Naive thymus-derived CD4-positive, alpha-beta T cell (primary cell): ENCODE measurements at regions of chr19 and their contacts with region 1.

Region 1: GRCh38 chr19:46661020-46661731 is at the start of gene DACT3:
- DNase-seq: peak; percentile 98 to 100 (median 99)
- ATAC-seq: peak; percentile 92
- H3K4me3 ChIP-seq: peak within 1 kb of the TSS; percentile 71
- H3K4me3 Mint-ChIP-seq: peak within 1 kb of the TSS; percentile 80 to 93 (median 86)
- H3K27ac ChIP-seq: peak within 1 kb of the TSS; percentile 65
- H3K27ac Mint-ChIP-seq: peak within 1 kb of the TSS; percentile 76 to 96 (median 91)
- H3K4me1 ChIP-seq: peaks cover 14 to 20% of the 10 kb centered on the region in 2 donors
- H3K4me1 Mint-ChIP-seq: peaks cover 7 to 26% (median 20%) of the 10 kb centered on the region in 7 donors
- H3K27me3 ChIP-seq: peaks cover 6 to 10% of the 10 kb centered on the region in 2 donors
- H3K27me3 Mint-ChIP-seq: peaks cover 9 to 42% (median 18%) of the 10 kb centered on the region in 5 donors
- total RNA-seq, gene DACT3: 0.11 to 1.3 (median 0.34) TPM in 4 of 5 experiments, not detected in the other

Region 2: GRCh38 chr19:46392243-46392801 is 268.9 kb before region 1 on chr19:
- CTCF ChIA-PET with region 1: no interaction called
- POLR2A ChIA-PET with region 1: no interaction called
- intact Hi-C with region 1: loop called in 1 of 2 experiments (anchors 1 kb)
- DNase-seq: no peak
- ATAC-seq: no peak
- H3K4me3 ChIP-seq: no peak overlapping the region
- H3K4me3 Mint-ChIP-seq: no peak overlapping the region
- H3K27ac ChIP-seq: peak overlapping the region; percentile 19
- H3K27ac Mint-ChIP-seq: peak overlapping the region in 3 of 9 donors; percentile 2 to 51 (median 40)
- H3K4me1 ChIP-seq: no peaks in the 10 kb centered on the region
- H3K4me1 Mint-ChIP-seq: peaks cover 0 to 18% (median 6%) of the 10 kb centered on the region in 7 donors
- H3K27me3 ChIP-seq: no peaks in the 10 kb centered on the region
- H3K27me3 Mint-ChIP-seq: no peaks in the 10 kb centered on the region

Region 3: GRCh38 chr19:46513461-46514236 is 147.5 kb before region 1 on chr19:
- CTCF ChIA-PET with region 1: interaction called, 8 read pairs
- POLR2A ChIA-PET with region 1: interaction called, 4 read pairs
- intact Hi-C with region 1: loop called in 1 of 2 experiments (anchors 1 kb)
- DNase-seq: peak in 8 of 9 donors; percentile 59 to 86 (median 72)
- ATAC-seq: peak; percentile 89
- H3K4me3 ChIP-seq: no peak overlapping the region
- H3K4me3 Mint-ChIP-seq: no peak overlapping the region
- H3K27ac ChIP-seq: no peak overlapping the region
- H3K27ac Mint-ChIP-seq: peak overlapping the region in 2 of 9 donors; percentile 32 to 64
- H3K4me1 ChIP-seq: peaks cover 5 to 22% of the 10 kb centered on the region in 2 donors
- H3K4me1 Mint-ChIP-seq: peaks cover 8 to 33% (median 29%) of the 10 kb centered on the region in 7 donors
- H3K27me3 ChIP-seq: no peaks in the 10 kb centered on the region
- H3K27me3 Mint-ChIP-seq: peaks cover 0 to 30% (median 13%) of the 10 kb centered on the region in 5 donors

Region 4: DNA sequence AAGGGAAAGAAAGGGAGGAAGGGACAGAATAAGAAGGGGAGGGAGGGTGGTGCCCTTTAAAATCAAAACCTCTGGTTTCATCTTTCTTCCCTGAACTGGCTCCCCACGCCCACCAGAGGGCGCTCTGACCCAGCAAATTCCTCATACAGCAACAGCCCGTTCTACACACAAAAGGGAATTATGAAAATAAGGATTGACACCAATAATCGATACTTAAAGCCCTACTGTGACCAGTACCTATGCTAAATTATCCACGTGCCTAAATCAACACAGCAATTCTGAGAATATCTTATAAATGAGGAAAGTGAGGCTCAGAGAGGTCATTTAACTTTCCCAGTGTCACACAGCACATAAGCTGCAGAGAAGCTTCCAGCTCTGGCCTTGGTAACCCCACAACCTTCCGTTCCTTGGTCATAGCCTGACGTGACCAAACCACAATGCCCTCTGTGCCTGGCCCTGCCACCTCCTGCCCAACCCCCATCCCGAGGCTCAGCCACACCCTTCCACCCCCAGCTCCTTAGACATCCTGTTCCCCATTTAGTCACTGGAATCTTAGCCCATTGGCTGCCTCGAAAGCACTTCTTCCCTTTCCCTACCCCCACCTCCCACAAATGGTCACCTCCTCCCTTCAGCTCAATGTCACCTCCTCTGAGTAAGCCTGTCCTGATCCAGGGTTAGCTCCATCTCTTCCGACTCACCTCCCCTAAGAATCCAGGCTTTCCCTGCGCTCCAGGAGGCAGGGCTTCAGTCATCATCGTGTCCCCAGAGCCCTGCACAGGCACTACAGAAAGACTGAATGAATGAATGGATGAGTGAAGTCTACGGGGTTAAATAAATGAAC is 131.3 kb before region 1 on chr19:
- CTCF ChIA-PET with region 1: interaction called, 46 read pairs
- POLR2A ChIA-PET with region 1: interaction called, 4 read pairs
- intact Hi-C with region 1: loop called (anchors 1 kb)
- DNase-seq: peak; percentile 57 to 83 (median 73)
- ATAC-seq: peak; percentile 95
- H3K4me3 ChIP-seq: no peak overlapping the region
- H3K4me3 Mint-ChIP-seq: peak overlapping the region in 4 of 10 donors; percentile 1 to 65 (median 32)
- H3K27ac ChIP-seq: no peak overlapping the region
- H3K27ac Mint-ChIP-seq: peak overlapping the region in 7 of 9 donors; percentile 17 to 89 (median 68)
- H3K4me1 ChIP-seq: peaks cover 8 to 19% of the 10 kb centered on the region in 2 donors
- H3K4me1 Mint-ChIP-seq: peaks cover 15 to 35% (median 23%) of the 10 kb centered on the region in 7 donors
- H3K27me3 ChIP-seq: no peaks in the 10 kb centered on the region
- H3K27me3 Mint-ChIP-seq: no peaks in the 10 kb centered on the region

Region 5: GRCh38 chr19:46542428-46543230 is 118.5 kb before region 1 on chr19:
- CTCF ChIA-PET with region 1: interaction called, 18 read pairs
- POLR2A ChIA-PET with region 1: no interaction called
- intact Hi-C with region 1: loop called (anchors 1 to 5 kb)
- DNase-seq: peak; percentile 46 to 73 (median 64)
- ATAC-seq: peak; percentile 87
- H3K4me3 ChIP-seq: no peak overlapping the region
- H3K4me3 Mint-ChIP-seq: no peak overlapping the region
- H3K27ac ChIP-seq: no peak overlapping the region
- H3K27ac Mint-ChIP-seq: peak overlapping the region in 2 of 9 donors; percentile 14 to 16
- H3K4me1 ChIP-seq: no peaks in the 10 kb centered on the region
- H3K4me1 Mint-ChIP-seq: peaks cover 2 to 13% (median 5%) of the 10 kb centered on the region in 7 donors
- H3K27me3 ChIP-seq: no peaks in the 10 kb centered on the region
- H3K27me3 Mint-ChIP-seq: peaks cover 0 to 11% (median 0%) of the 10 kb centered on the region in 5 donors

Region 6: DNA sequence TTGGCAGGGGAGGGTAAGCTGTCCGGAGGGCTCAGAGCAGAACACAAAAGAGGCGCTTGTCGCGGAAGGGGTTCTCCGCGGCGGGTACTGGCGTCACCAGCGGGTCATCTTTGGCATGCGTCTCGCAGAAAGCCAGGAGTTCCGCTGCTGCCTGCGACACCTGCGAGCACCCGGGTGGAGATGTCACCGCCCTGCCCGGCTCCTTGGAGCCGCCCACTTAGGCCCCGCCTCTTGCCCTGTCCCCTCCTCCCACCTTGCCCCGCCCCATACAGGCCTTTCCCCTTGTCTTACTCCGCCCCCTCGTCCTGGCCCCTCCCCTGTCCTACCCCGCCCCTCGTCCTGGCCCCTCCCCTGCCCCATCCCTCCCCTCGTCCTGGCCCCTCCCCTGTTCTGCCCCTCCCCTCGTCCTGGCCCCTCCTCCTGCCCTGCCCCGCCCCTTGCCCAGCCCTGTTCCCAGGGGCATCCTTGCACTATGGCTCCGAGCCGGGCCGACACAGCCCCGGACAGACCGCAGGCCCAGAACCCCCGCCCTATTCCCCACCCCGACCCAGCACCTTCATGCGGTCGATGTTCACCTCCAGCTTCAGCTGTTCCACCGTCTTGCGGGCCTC is 27.0 kb before region 1 on chr19:
- CTCF ChIA-PET with region 1: interaction called, 9 read pairs
- POLR2A ChIA-PET with region 1: interaction called, 6 read pairs
- intact Hi-C with region 1: loop called (anchors 1 kb)
- DNase-seq: peak; percentile 86 to 99 (median 97)
- ATAC-seq: peak; percentile 91
- H3K4me3 ChIP-seq: peak overlapping the region; percentile 62
- H3K4me3 Mint-ChIP-seq: peak overlapping the region in 9 of 10 donors; percentile 81 to 90 (median 87)
- H3K27ac ChIP-seq: peak overlapping the region; percentile 90
- H3K27ac Mint-ChIP-seq: peak overlapping the region in 8 of 9 donors; percentile 66 to 98 (median 94)
- H3K4me1 ChIP-seq: peaks cover 22 to 23% of the 10 kb centered on the region in 2 donors
- H3K4me1 Mint-ChIP-seq: peaks cover 10 to 32% (median 23%) of the 10 kb centered on the region in 7 donors
- H3K27me3 ChIP-seq: no peaks in the 10 kb centered on the region
- H3K27me3 Mint-ChIP-seq: peaks cover 0 to 13% (median 0%) of the 10 kb centered on the region in 5 donors